Caco-2 (cell line): ENCODE measurements at regions of chr2 and their contacts with region 1.

Region 1: DNA sequence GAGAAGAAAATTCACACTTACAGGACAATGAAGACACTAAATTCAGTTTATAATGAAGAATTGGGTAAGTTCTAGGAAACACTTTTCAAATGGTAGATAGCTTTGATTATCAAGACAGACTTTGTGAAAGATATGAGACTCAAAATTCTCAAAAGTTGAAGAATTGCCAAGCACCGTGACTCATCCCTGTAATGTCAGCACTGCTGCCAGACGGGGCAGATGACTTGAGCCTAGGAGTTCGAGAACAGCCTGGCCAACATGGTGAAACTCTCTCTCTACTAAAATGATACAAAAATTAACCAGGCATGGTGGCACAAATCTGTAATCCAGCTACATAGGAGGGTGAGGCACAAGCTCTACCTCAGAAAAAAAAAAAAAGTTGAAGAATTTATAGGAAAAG is 1820.1 kb upstream of the LRRTM1 start:
- DNase-seq: no peak
- H3K4me3 ChIP-seq: no peak overlapping the region
- H3K4me3 Mint-ChIP-seq: no peak overlapping the region
- H3K27ac Mint-ChIP-seq: no peak overlapping the region
- H3K4me1 ChIP-seq: peaks cover 22% of the 10 kb centered on the region
- H3K4me1 Mint-ChIP-seq: peaks cover 15% of the 10 kb centered on the region
- H3K27me3 ChIP-seq: no peaks in the 10 kb centered on the region
- H3K27me3 Mint-ChIP-seq: no peaks in the 10 kb centered on the region
- CTCF ChIP-seq: no peak

Region 2: GRCh38 chr2:82139985-82140611 is 15.5 kb after region 1 on chr2:
- CTCF ChIA-PET with region 1: no interaction called
- POLR2A ChIA-PET with region 1: no interaction called
- intact Hi-C with region 1: loop called (anchors 1 kb)
- DNase-seq: peak; percentile 56 to 57
- H3K4me3 ChIP-seq: no peak overlapping the region
- H3K4me3 Mint-ChIP-seq: peak overlapping the region; percentile 33
- H3K27ac Mint-ChIP-seq: no peak overlapping the region
- H3K4me1 ChIP-seq: peaks cover 19% of the 10 kb centered on the region
- H3K4me1 Mint-ChIP-seq: peaks cover 8% of the 10 kb centered on the region
- H3K27me3 ChIP-seq: no peaks in the 10 kb centered on the region
- H3K27me3 Mint-ChIP-seq: peaks cover 2% of the 10 kb centered on the region
- CTCF ChIP-seq: no peak